Mammary epithelial cell (primary cell): ENCODE measurements at regions of chr11 and their contacts with region 1.

Region 1: DNA sequence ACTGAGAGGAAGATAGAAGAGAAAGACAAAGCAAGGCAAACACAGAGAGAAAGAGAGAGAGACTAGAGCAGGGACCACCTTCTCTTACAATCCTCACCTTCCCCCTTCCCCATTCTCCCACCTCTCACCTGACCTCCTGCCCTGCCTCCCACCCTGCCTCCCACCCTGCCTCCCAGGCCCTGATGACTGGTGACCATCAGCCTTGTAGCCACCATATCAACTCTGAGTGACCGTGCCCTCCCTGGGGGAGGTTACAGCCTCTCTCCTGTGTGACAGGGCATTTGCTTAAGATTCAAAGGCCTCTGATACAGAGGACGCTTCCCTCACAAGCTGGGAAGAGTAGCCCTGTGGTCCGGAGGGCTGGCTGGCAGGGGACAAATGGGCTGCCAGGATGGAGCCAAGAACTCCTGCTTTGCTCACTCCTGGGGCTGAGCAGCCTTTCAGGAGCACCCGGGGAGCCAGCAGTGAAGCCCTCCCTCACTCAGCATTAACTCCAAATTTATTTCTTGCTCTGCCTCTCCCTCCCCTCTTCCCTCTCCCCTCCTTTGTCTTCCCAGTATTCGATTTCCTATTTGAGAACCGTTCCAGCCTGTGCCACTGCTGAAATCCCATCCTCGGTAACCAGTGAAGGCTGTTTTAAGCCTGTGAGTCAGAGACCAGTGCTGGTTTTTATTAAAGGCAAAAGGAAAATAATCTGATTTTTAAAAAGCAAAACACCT is 125.2 kb upstream of the SYT13 start:
- DNase-seq: no peak
- H3K4me3 ChIP-seq: no peak overlapping the region
- H3K27ac ChIP-seq: no peak overlapping the region
- H3K4me1 ChIP-seq: no peaks in the 10 kb centered on the region
- H3K27me3 ChIP-seq: peaks cover 3% of the 10 kb centered on the region
- CTCF ChIP-seq: no peak

Region 2: DNA sequence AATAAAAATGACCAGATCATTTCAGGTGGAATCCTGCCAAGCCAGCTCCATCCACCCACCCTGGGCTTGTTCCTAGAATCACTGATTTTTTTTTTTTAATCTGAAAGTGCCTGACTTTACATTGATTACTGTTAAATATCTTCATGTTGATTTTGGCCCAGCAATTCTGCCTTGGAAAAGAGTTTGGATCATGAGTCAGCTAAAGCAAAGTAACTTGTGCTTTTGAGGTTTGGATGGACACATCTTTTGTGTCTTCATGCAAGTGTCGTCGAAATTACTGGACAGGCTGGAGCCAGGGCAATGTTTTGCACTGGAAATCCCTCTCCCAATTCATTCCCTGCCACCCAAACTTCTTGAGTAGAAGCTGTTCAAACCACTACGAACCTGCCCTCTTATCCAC is 38.8 kb after region 1 on chr11:
- CTCF ChIA-PET with region 1: no interaction called
- dilution Hi-C with region 1: loop called (anchors 5 kb)
- in situ Hi-C with region 1: no loop called
- intact Hi-C with region 1: no loop called
- DNase-seq: no peak
- H3K4me3 ChIP-seq: no peak overlapping the region
- H3K27ac ChIP-seq: no peak overlapping the region
- H3K4me1 ChIP-seq: peaks cover under 1% of the 10 kb centered on the region
- H3K27me3 ChIP-seq: no peaks in the 10 kb centered on the region
- CTCF ChIP-seq: no peak

Region 3: GRCh38 chr11:45930031-45930794 is 518.8 kb after region 1 on chr11:
- CTCF ChIA-PET with region 1: no interaction called
- dilution Hi-C with region 1: no loop called
- in situ Hi-C with region 1: no loop called
- intact Hi-C with region 1: no loop called
- DNase-seq: peak; percentile 36
- H3K4me3 ChIP-seq: no peak overlapping the region
- H3K27ac ChIP-seq: peak overlapping the region; percentile 64
- H3K4me1 ChIP-seq: peaks cover 72% of the 10 kb centered on the region
- H3K27me3 ChIP-seq: no peaks in the 10 kb centered on the region
- CTCF ChIP-seq: no peak